Ascending aorta (tissue), 2 donors: ENCODE measurements at regions of chr20 and their contacts with region 1.

Region 1: GRCh38 chr20:13819885-13820645 is 35.2 kb downstream of the NDUFAF5 start:
- DNase-seq: no peak
- H3K4me3 ChIP-seq: no peak overlapping the region
- H3K27ac ChIP-seq: no peak overlapping the region
- H3K4me1 ChIP-seq: no peaks in the 10 kb centered on the region
- H3K27me3 ChIP-seq: no peaks in the 10 kb centered on the region
- CTCF ChIP-seq: peak; percentile 25 to 68 (median 55)

Region 2: GRCh38 chr20:13953227-13953626 is 133.2 kb after region 1 on chr20:
- intact Hi-C with region 1: loop called (anchors 2 kb)
- DNase-seq: no peak
- H3K4me3 ChIP-seq: no peak overlapping the region
- H3K27ac ChIP-seq: no peak overlapping the region
- H3K4me1 ChIP-seq: no peaks in the 10 kb centered on the region
- H3K27me3 ChIP-seq: no peaks in the 10 kb centered on the region
- CTCF ChIP-seq: no peak

Region 3: DNA sequence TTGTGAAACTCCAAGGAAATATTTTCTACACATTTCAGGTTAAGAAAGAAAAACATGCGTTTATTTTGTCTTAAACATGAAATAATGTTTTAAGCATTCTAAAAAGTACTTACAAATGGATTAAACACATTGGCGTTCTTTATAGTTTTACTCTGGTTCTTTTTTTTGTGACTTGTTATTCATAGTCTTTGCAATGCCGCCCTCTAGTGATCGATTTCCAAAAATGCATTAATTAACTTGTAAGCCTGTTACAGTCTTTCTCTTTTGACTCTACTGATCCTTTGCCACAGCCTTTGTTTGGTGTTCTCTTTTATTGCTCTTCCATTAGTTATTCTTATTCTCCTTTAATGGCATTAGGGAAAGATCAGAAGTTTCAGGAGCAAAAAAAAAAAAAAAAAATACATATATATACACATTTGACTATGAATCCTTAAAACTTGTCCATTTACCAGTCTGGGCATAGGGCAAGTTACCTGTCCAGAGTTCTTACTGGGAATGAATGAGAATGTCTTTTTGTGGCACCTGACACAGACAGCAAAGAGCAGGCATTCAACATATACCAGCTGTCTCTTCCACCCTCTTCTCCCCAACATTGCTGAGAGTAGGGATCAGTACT is 235.2 kb after region 1 on chr20:
- intact Hi-C with region 1: loop called (anchors 1 kb)
- DNase-seq: no peak
- H3K4me3 ChIP-seq: no peak overlapping the region
- H3K27ac ChIP-seq: no peak overlapping the region
- H3K4me1 ChIP-seq: no peaks in the 10 kb centered on the region
- H3K27me3 ChIP-seq: no peaks in the 10 kb centered on the region
- CTCF ChIP-seq: peak; percentile 22 to 58 (median 55)

Region 4: GRCh38 chr20:14498772-14499171 is 678.7 kb after region 1 on chr20:
- intact Hi-C with region 1: no loop called
- DNase-seq: no peak
- H3K4me3 ChIP-seq: no peak overlapping the region
- H3K27ac ChIP-seq: no peak overlapping the region
- H3K4me1 ChIP-seq: no peaks in the 10 kb centered on the region
- H3K27me3 ChIP-seq: no peaks in the 10 kb centered on the region
- CTCF ChIP-seq: no peak